IMR-90 (cell line): ENCODE measurements at regions of chr18 and their contacts with region 1.

Region 1: GRCh38 chr18:74661691-74662090 is 64.0 kb downstream of the ZNF407 start:
- DNase-seq: peak; percentile 6
- ATAC-seq: no peak
- H3K4me3 ChIP-seq: no peak overlapping the region
- H3K27ac ChIP-seq: peak overlapping the region; percentile 29; the same call in 1 of the 2 replicates
- H3K4me1 ChIP-seq: peaks cover 4% of the 10 kb centered on the region
- H3K27me3 ChIP-seq: no peaks in the 10 kb centered on the region
- CTCF ChIP-seq: no peak
- POLR2A ChIP-seq: no peak
- RAD21 ChIP-seq: no peak

Region 2: GRCh38 chr18:74963820-74964446 is 302.2 kb after region 1 on chr18:
- CTCF ChIA-PET with region 1: no interaction called
- POLR2A ChIA-PET with region 1: no interaction called
- dilution Hi-C with region 1: no loop called
- in situ Hi-C with region 1: loop called (anchors 5 kb)
- intact Hi-C with region 1: loop called (anchors 1 kb)
- DNase-seq: peak; percentile 56
- ATAC-seq: peak; percentile 69
- H3K4me3 ChIP-seq: no peak overlapping the region
- H3K27ac ChIP-seq: no peak overlapping the region
- H3K4me1 ChIP-seq: no peaks in the 10 kb centered on the region
- H3K27me3 ChIP-seq: no peaks in the 10 kb centered on the region
- CTCF ChIP-seq: peak; percentile 51
- POLR2A ChIP-seq: no peak
- RAD21 ChIP-seq: peak; percentile 52